Activated naive CD4-positive, alpha-beta T cell treated with anti-CD3 and anti-CD28 coated beads, Interleukin-2, amount 10 ng/mL, durations not matched to agents 7 days and 5 days (primary cell): ENCODE measurements at regions of chr6 and their contacts with region 1.

Region 1: DNA sequence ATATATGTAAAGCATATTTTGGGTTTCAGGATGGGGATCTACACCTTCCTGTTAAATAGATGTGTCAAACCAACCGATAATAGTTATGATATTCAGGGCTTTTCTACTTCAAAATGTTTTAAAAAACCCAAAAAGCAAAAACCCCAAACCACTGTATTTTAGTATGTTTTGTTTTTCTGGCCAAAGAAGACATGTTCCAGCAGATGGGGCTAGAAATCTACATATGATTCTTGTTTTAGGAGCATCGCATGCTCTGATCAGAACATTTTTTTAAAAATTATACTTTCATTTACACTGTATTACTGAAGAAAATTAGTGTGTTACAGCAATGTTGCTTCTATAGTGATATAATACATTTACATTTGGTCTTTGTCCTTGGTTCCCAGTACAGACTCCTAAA is 11.0 kb downstream of the RMND1 start:
- DNase-seq: no peak
- H3K4me3 Mint-ChIP-seq: no peak overlapping the region
- H3K27ac Mint-ChIP-seq: peak overlapping the region; percentile 15
- H3K4me1 Mint-ChIP-seq: peaks cover 24% of the 10 kb centered on the region
- H3K27me3 Mint-ChIP-seq: no peaks in the 10 kb centered on the region

Region 2: DNA sequence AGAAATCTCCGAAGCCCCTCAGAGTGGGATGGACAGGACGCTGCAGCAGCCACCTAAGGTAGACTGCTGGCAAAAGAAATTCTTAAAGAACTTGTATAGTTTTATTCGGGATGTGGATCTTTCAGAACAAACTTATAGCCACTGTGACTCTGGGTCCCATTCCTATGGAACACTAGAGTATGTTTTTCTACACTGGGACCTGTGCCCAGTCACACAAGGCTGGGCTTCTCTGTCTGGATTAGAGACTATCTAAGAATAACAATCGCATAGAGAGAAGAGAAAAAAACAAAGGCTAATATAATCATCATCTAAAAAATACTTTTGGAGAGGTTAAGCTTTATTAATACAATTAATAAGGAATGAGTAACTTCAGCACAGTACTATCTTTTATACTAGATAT is 17.9 kb before region 1 on chr6:
- CTCF ChIA-PET with region 1: no interaction called
- DNase-seq: no peak
- H3K4me3 Mint-ChIP-seq: no peak overlapping the region
- H3K27ac Mint-ChIP-seq: no peak overlapping the region
- H3K4me1 Mint-ChIP-seq: no peaks in the 10 kb centered on the region
- H3K27me3 Mint-ChIP-seq: no peaks in the 10 kb centered on the region

Region 3: GRCh38 chr6:151451950-151452749 is 11.2 kb after region 1 on chr6 and contains the start of gene RMND1:
- CTCF ChIA-PET with region 1: interaction called, 16 read pairs
- DNase-seq: peak; percentile 100
- H3K4me3 Mint-ChIP-seq: peak within 1 kb of the TSS; percentile 97
- H3K27ac Mint-ChIP-seq: peak within 1 kb of the TSS; percentile 95
- H3K4me1 Mint-ChIP-seq: peaks cover 37% of the 10 kb centered on the region
- H3K27me3 Mint-ChIP-seq: no peaks in the 10 kb centered on the region